Head of caudate nucleus (tissue), 42 donors: ENCODE measurements at regions of chr2 and their contacts with region 1.

Region 1: DNA sequence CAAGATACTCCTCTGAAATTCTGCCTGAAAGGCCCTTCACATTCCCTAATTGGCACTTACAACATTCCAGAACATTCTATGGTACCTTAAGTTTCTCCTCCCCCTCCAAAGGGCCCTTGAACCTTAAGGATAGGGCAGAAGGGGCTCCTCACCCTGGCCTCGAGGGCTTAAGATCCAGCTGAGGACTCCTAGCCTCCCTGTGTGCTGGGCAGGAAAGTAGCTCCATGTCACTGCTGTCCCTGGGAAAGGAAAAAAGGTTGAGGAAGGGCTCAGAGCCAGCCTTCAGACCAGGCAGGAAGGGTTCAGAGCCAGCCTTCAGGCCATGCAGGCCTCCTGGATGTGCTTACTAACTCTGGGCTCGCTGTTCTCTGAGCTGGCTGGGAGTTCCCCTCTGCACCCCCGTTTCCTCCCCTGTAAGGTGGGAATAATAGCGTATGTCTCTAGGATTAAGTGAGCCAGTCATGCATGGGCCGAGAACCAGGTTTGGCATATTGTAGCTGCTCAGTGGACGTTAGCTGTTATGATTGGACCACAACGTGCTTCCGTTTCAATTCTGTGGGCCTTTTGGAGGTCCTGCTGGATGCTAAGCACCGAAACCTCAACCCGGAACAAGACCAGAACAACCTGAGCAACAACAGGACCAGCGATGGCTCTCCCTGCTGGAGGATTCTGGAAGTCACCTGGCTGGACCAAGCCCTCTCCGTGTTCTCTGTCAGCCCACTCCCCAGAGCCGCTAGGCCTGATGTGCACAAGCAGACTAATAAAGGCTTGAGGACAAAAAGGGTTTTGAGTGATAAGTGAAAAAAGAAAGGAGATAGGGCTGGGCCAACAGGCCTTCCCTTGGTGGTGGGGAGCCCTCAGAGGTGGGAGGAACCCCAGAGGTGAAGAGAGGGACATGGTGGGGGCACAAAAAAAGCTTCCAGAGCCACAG is 1.0 kb upstream of the B3GNT7 start:
- DNase-seq: no peak

Region 2: GRCh38 chr2:231348173-231348572 is 46.3 kb before region 1 on chr2:
- intact Hi-C with region 1: loop called (anchors 5 kb)
- DNase-seq: peak in 1 of 42 donors; percentile 2

Region 3: GRCh38 chr2:231482806-231483391 is 88.4 kb after region 1 on chr2:
- intact Hi-C with region 1: no loop called
- DNase-seq: peak; percentile 48 to 89 (median 77)